Ascending aorta (tissue), 2 donors: ENCODE measurements at regions of chr9 and their contacts with region 1.

Region 1: GRCh38 chr9:136728080-136728547 is 14.6 kb downstream of the LCN10 start:
- DNase-seq: peak; percentile 54 to 91
- H3K4me3 ChIP-seq: peak overlapping the region; percentile 74 to 81
- H3K27ac ChIP-seq: peak overlapping the region in 1 of 2 donors; percentile 45
- H3K4me1 ChIP-seq: peaks cover 16 to 18% of the 10 kb centered on the region in 2 donors
- H3K27me3 ChIP-seq: no peaks in the 10 kb centered on the region
- CTCF ChIP-seq: peak; percentile 80 to 98 (median 86)

Region 2: GRCh38 chr9:136439550-136440408 is 288.3 kb before region 1 on chr9 and contains the start of gene INPP5E:
- intact Hi-C with region 1: no loop called
- DNase-seq: peak in 1 of 2 donors; percentile 80
- H3K4me3 ChIP-seq: peak within 1 kb of the TSS; percentile 83 to 86
- H3K27ac ChIP-seq: peak within 1 kb of the TSS; percentile 6 to 47
- H3K4me1 ChIP-seq: peaks cover 14 to 15% of the 10 kb centered on the region in 2 donors
- H3K27me3 ChIP-seq: no peaks in the 10 kb centered on the region
- CTCF ChIP-seq: peak; percentile 49 to 84 (median 51)
- total RNA-seq, gene INPP5E: 20.2 TPM

Region 3: GRCh38 chr9:136686794-136687711 is 41.1 kb before region 1 on chr9 and contains the start of gene AGPAT2:
- intact Hi-C with region 1: loop called (anchors 5 kb)
- DNase-seq: peak in 1 of 2 donors; percentile 83
- H3K4me3 ChIP-seq: peak within 1 kb of the TSS; percentile 91 to 92
- H3K27ac ChIP-seq: peak within 1 kb of the TSS; percentile 61 to 72
- H3K4me1 ChIP-seq: peaks cover 11 to 18% of the 10 kb centered on the region in 2 donors
- H3K27me3 ChIP-seq: no peaks in the 10 kb centered on the region
- CTCF ChIP-seq: no peak
- total RNA-seq, gene AGPAT2: 129 TPM